ENCODE measurements at regions of chr2 and their contacts with region 1.

Region 1: GRCh38 chr2:52336951-52337350 is 1305.0 kb upstream of the NRXN1 start:
- DNase-seq: no peak
- ATAC-seq: no peak
- H3K4me3 ChIP-seq: no peak overlapping the region
- H3K27ac ChIP-seq: no peak overlapping the region
- H3K4me1 ChIP-seq: no peaks in the 10 kb centered on the region
- H3K27me3 ChIP-seq: no peaks in the 10 kb centered on the region
- CTCF ChIP-seq: no peak

Region 2: DNA sequence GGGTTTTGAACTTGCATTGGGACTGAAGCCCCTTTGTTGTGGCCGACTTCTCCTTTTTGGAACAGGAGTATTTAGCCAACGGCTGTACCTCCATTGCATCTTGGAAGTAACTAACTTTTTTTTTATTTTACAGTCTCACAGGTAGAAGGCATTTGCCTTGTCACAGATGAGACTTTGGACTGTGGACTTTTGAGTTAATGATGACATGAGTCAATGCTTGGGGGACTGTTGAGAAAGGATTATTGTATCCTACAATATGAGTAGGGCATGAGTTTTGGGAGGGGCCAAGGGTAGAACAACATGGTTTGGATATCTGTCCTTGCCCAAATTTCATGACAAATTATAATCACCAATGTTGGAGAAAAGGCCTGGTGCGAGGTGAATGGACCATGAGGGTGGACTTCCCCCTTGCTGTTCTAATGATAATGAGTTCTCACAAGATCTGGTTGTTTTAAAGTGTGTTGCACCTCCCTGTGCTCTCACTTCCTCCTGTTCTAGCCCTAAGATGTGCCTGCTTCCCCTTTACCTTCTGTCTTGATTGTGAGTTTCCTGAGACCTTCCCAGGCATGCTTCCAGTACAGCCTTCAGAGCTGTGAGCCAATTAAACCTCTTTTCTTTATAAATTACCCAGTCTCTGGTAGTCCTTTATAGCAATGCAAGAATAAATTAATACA is 161.3 kb after region 1 on chr2:
- intact Hi-C with region 1: loop called in 1 of 2 experiments (anchors 10 kb)
- DNase-seq: no peak
- ATAC-seq: no peak
- H3K4me3 ChIP-seq: no peak overlapping the region
- H3K27ac ChIP-seq: no peak overlapping the region
- H3K4me1 ChIP-seq: no peaks in the 10 kb centered on the region
- H3K27me3 ChIP-seq: no peaks in the 10 kb centered on the region
- CTCF ChIP-seq: no peak

Measured in left lung (tissue), 14 donors.